Activated CD4-positive, alpha-beta memory T cell treated with anti-CD3 and anti-CD28 coated beads for 36 hours (primary cell): ENCODE measurements at regions of chr5 and their contacts with region 1.

Region 1: GRCh38 chr5:157271740-157272271 is 5.9 kb downstream of the CYFIP2 start:
- DNase-seq: peak; percentile 94
- H3K4me3 Mint-ChIP-seq: peak overlapping the region; percentile 69
- H3K27ac Mint-ChIP-seq: peak overlapping the region; percentile 97
- H3K4me1 Mint-ChIP-seq: peaks cover 86% of the 10 kb centered on the region
- H3K27me3 Mint-ChIP-seq: no peaks in the 10 kb centered on the region

Region 2: DNA sequence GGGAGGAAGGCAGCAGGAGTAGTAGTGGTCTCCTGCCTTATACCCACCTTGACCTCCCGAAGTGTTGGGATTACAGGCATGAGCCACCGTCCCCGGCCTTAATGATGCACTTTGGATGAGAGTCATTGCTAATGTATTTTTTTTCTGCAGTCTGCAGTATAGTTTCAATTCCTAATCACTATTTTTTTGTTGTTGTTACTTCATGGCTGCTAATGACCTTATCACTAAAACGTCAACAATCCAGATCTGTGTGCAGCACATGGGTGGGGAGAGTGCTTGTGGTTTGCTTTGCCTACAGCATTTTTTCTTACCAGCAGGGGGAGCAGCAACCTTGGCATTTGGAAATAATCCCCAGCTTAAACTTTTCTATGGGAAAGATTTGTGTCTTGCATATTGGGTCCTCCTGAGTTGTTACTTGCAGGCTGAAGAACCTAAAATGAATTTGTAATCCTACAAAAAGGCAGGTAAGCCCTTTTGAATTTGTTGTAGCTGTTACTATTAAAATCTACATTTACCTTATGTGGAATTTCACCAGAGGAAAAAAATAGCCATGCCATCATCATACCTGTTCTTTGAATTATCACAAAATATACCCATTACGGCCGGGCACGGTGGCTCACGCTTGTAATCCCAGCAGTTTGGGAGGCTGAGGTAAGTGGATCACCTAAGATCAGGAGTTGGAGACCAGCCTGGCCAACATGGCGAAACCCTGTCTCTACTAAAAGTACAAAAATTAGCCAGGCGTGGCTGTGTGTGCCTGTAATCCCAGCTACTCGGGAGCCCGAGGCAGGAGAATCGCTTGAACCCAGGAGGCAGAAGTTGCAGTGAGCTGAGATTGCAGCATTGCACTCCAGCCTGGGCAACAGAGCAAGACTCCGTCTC is 122.8 kb before region 1 on chr5:
- CTCF ChIA-PET with region 1: interaction called, 9 read pairs
- POLR2A ChIA-PET with region 1: no interaction called
- intact Hi-C with region 1: loop called (anchors 1 kb)
- DNase-seq: peak; percentile 87
- H3K4me3 Mint-ChIP-seq: peak overlapping the region; percentile 3
- H3K27ac Mint-ChIP-seq: peak overlapping the region; percentile 68
- H3K4me1 Mint-ChIP-seq: peaks cover 47% of the 10 kb centered on the region
- H3K27me3 Mint-ChIP-seq: no peaks in the 10 kb centered on the region

Region 3: DNA sequence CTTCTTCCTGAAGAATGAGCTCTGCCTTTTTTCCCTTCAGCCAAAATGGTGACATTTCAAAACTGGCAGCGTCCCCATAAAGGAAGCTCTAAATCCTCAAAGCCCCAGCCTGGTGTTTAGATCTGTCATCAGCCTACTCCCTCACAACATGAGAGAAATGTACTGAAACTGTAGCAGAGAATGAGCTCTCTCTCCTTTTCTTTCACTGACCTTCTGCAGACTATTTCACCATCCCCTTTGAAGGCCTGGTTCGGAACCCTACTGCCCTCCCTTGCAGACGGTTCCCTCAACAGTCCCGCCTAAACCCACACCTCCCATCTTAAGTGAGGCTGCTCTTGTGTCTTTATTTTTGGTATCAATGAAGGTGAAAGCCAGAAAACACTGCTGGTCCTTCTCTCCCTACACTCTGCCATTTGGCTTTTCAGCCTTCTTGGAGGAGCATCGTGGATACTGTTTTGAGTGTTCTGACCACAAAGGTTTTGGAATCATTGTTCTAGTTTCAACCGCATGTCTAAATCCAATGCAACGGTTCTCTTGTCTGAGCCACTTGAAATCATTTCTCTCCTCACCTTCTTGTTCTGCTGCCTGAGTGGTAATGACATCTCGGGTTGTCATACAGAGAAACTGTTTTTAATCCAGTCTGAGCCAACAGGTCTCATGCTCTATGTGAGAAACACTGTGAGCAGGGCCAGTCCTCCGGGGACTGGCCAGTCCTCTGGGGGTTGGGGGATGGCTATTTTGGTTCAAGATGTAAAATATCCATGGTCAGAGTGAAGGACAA is 52.1 kb before region 1 on chr5:
- CTCF ChIA-PET with region 1: interaction called, 6 read pairs
- POLR2A ChIA-PET with region 1: interaction called, 14 read pairs
- intact Hi-C with region 1: loop called (anchors 1 kb)
- DNase-seq: peak; percentile 58
- H3K4me3 Mint-ChIP-seq: peak overlapping the region; percentile 58
- H3K27ac Mint-ChIP-seq: peak overlapping the region; percentile 98
- H3K4me1 Mint-ChIP-seq: peaks cover 86% of the 10 kb centered on the region
- H3K27me3 Mint-ChIP-seq: no peaks in the 10 kb centered on the region

Region 4: DNA sequence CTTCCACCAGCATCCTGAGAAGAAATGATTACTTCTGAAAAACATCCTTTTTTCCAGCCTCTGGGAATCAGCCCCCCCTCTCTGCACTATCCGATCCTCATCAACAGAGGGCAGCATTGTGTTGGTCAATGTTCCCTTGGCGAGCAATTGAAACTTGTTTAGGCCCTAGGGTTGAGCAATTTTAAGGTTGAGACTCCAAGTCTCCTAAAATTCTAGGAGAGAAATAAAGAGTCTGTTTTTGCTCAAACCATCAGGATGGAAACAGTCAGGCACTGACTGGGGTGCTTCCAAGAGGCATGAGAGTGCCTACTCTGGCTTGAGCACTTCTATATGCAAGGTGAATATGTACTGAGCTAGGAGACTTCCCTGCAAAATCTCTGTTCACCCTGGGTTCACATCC is 18.3 kb before region 1 on chr5:
- CTCF ChIA-PET with region 1: interaction called, 28 read pairs
- POLR2A ChIA-PET with region 1: interaction called, 22 read pairs
- intact Hi-C with region 1: loop called (anchors 1 kb)
- DNase-seq: no peak
- H3K4me3 Mint-ChIP-seq: peak overlapping the region; percentile 39
- H3K27ac Mint-ChIP-seq: peak overlapping the region; percentile 96
- H3K4me1 Mint-ChIP-seq: peaks cover 92% of the 10 kb centered on the region
- H3K27me3 Mint-ChIP-seq: no peaks in the 10 kb centered on the region

Region 5: DNA sequence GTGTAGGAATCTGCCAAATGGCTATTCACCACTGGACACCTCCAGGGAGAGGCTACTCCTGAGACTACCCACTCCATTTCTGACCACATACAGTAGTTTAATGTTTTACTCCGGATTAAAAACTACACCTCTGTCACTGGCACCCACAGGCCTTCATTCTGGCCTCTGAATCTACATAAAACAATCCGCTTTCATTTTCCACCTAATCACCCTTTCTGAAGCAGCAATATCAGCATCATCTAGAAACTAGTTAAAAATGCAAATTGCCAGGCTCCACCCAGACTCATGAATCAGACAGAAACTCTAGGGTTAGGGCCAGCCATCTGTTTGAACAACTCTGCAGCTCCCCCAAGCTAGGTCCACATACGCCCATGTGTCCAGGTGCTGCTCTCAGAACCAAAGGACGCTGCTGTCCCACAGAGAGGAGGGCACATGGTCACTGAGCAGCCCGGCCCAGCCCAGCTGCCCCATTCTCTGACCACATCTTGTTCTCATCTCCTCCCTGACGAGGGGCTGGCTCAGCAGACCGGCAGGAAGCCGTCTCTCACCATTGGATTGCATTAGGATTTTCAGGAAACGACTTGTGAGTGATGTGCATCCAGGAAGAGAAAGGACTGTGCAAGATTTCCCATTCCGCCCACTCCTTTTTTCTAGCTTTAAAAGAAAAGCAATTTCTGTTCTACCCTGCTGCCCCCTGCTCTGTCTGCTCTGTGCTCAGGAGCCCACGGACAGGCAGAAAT is 269.1 kb after region 1 on chr5:
- CTCF ChIA-PET with region 1: no interaction called
- POLR2A ChIA-PET with region 1: no interaction called
- intact Hi-C with region 1: loop called (anchors 2 kb)
- DNase-seq: peak; percentile 74
- H3K4me3 Mint-ChIP-seq: peak overlapping the region; percentile 65
- H3K27ac Mint-ChIP-seq: peak overlapping the region; percentile 98
- H3K4me1 Mint-ChIP-seq: peaks cover 87% of the 10 kb centered on the region
- H3K27me3 Mint-ChIP-seq: no peaks in the 10 kb centered on the region